Dorsolateral prefrontal cortex (tissue), 120 donors: ENCODE measurements at regions of chr5 and their contacts with region 1.

Region 1: DNA sequence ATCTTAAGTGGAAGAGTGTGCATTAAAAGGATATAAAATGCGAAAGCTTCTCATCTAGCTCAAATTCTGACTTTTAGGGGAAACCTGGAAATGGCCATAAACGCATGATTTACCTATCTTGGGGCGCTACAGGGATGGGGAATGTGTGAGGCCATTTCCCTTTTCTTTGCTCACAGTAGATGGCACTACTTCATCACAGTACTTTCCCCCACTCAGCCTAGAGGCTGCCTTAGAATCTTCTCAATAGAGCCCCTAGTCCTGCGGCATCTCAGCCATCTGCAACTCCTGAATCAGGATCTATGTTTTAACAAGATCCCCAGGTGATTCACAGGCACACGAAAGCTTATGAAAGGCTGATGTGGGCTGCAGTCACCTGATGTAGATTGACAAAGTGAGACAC is 110.8 kb downstream of the LHFPL2 start:
- DNase-seq: peak in 3 of 10 donors; percentile 32 to 48 (median 37)
- H3K4me3 ChIP-seq: no peak overlapping the region
- H3K27ac ChIP-seq: peak overlapping the region in 16 of 59 donors; percentile 1 to 83 (median 28)
- H3K27me3 ChIP-seq: no peaks in the 10 kb centered on the region
- CTCF ChIP-seq: peak in 55 of 56 donors; percentile 43 to 90 (median 75)

Region 2: GRCh38 chr5:78359831-78360673 is 177.8 kb before region 1 on chr5 and contains the start of gene SCAMP1:
- intact Hi-C with region 1: loop called in 1 of 2 experiments (anchors 10 kb)
- DNase-seq: peak; percentile 78 to 93 (median 86)
- H3K4me3 ChIP-seq: peak within 1 kb of the TSS; percentile 67 to 100 (median 97)
- H3K27ac ChIP-seq: peak within 1 kb of the TSS; percentile 72 to 98 (median 91)
- H3K27me3 ChIP-seq: no peaks in the 10 kb centered on the region
- CTCF ChIP-seq: peak in 42 of 56 donors; percentile 13 to 61 (median 37)
- total RNA-seq, gene SCAMP1: 54.8 to 153 (median 108) TPM

Region 3: GRCh38 chr5:78467752-78468357 is 70.0 kb before region 1 on chr5:
- intact Hi-C with region 1: loop called (anchors 5 to 10 kb)
- DNase-seq: no peak
- H3K4me3 ChIP-seq: no peak overlapping the region
- H3K27ac ChIP-seq: no peak overlapping the region
- H3K27me3 ChIP-seq: no peaks in the 10 kb centered on the region
- CTCF ChIP-seq: peak; percentile 43 to 85 (median 77)

Region 4: DNA sequence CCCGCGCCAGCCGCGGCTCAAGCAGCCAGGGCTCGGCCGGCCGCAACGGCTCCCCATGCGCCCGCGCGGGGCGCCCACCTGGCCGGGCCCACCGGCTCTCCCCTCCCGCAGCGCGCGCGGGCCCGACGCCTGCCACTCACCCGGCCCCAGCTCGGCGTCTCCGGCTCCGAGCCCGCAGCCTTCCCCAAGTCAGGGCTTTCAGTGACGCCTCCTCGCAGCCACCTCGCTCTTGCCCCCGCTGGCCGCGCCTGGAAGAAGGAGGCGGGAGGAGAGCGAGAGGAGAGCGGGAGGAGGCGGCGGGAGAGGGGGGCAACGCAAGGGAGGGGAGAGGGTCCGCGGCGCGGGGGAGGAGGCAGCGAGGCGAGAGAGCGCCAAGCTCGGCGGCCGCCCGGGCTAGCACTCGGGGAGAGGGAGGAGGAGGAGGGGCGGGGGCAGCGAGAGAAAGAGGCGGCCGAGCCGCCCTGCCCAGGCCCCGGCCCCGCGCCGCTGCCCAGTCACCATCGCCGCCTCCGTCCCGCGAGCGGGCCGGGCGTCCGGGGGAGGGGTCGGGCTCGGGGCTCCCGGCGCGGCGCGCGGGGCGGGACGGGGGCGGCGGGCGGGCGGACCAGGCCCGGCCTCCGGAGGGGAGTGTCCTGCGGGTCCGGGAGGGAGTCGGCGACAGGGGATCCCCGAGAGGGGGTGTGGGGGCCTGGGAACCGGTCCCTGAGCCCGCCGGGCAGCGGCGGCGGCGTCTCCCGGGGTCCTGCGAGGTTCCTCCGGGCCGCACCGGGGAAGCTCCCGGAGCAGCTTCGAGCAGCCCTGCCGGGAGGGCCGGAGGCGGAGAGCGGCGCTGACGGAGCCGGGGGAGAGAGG is 110.8 kb after region 1 on chr5 and contains the start of gene LHFPL2:
- intact Hi-C with region 1: loop called (anchors 1 to 2 kb)
- DNase-seq: peak in 7 of 10 donors; percentile 31 to 74 (median 53)
- H3K4me3 ChIP-seq: peak within 1 kb of the TSS; percentile 50 to 89 (median 76)
- H3K27ac ChIP-seq: peak within 1 kb of the TSS in 57 of 59 donors; percentile 31 to 96 (median 86)
- H3K27me3 ChIP-seq: no peaks in the 10 kb centered on the region
- CTCF ChIP-seq: peak in 3 of 56 donors; percentile 2 to 5 (median 3)
- total RNA-seq, gene LHFPL2: 8.2 to 40.9 (median 18.7) TPM

Region 5: DNA sequence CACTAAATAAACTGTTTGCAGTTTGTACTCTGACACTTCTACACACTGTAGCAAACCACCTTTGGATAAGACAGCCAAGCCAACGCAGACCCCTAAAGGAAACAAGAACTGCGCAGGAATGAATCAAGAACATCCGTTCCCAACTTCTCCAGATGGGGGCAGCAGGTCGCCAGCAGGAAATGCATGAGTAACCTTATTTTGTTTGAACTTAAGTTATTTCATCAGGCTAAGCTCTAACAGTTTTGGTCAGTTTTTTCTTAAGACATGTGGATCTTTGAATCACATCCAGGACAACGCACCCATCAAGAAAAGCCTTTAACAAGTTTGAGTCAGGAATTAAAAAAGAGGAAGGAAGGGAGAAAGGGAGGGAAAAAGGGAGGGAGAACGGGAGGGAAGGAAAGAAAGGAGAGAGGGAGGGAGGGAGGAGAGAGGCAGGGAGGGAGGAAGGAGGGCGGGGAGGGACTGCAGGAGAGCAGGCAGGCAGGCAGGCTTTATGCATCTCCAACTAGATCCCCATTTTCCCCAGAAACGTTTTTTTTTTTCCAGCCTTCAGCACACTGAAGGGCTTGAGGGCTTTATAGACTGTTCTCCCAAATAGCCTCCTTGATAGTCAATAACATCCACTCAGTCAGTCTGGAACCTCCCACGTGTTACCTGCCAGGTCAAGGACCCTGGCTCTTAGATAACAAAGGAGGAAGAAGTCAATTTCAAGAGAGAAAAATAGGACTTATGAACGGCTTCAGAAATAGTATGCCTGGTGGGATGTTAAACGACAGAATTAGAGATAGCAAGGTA is 596.0 kb after region 1 on chr5:
- intact Hi-C with region 1: loop called in 1 of 2 experiments (anchors 10 kb)
- DNase-seq: peak; percentile 27 to 76 (median 57)
- H3K4me3 ChIP-seq: peak overlapping the region in 57 of 59 donors; percentile 6 to 66 (median 41)
- H3K27ac ChIP-seq: peak overlapping the region in 54 of 59 donors; percentile 3 to 88 (median 68)
- H3K27me3 ChIP-seq: no peaks in the 10 kb centered on the region
- CTCF ChIP-seq: peak in 55 of 56 donors; percentile 37 to 79 (median 65)